Activated CD8-positive, alpha-beta memory T cell treated with anti-CD3 and anti-CD28 coated beads, Interleukin-2, amount 10 ng/mL, durations not matched to agents 7 days and 5 days (primary cell): ENCODE measurements at regions of chr7 and their contacts with region 1.

Region 1: DNA sequence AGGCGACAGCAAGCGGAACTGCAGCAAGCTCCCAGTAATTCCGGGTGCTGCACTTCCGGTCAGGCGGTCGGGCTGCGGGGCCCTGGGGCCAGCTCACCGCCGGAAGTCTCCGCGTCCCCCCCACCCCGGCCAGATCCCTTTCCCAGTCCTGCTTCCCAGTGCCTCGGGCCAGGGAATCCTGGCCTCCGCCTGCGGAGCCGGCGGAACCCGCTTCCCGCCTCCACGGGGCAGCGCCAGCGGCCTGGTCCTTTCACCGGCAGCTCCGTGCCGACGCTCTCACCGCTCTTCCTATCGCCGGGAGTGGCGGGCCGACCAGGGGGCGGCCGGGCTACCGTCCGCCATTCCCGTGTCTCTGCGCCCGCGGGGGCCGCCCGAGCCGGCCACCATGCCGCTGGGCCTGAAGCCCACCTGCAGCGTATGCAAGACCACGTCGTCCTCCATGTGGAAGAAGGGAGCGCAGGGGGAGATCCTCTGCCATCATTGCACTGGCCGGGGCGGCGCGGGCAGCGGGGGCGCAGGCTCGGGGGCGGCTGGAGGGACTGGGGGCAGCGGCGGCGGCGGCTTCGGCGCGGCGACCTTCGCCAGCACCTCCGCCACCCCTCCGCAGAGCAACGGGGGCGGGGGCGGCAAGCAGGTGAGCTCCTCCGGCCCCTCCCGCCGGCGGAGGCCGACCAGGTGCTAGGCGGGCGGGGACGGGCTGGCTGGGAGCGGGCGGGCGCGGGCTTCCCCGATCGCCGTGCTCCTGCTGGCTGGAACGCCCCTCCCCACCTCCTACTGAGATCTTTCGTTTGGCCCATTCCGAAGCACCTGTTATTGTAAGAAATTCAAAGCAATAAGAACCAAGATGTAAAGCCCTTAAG is at the start of gene GATAD1:
- DNase-seq: peak; percentile 89
- ATAC-seq: peak; percentile 85
- H3K4me3 Mint-ChIP-seq: peak within 1 kb of the TSS; percentile 80
- H3K27ac Mint-ChIP-seq: peak within 1 kb of the TSS; percentile 88
- H3K4me1 Mint-ChIP-seq: peaks cover 11% of the 10 kb centered on the region
- H3K27me3 Mint-ChIP-seq: no peaks in the 10 kb centered on the region
- total RNA-seq, gene GATAD1: 18.3 to 21.0 TPM

Region 2: DNA sequence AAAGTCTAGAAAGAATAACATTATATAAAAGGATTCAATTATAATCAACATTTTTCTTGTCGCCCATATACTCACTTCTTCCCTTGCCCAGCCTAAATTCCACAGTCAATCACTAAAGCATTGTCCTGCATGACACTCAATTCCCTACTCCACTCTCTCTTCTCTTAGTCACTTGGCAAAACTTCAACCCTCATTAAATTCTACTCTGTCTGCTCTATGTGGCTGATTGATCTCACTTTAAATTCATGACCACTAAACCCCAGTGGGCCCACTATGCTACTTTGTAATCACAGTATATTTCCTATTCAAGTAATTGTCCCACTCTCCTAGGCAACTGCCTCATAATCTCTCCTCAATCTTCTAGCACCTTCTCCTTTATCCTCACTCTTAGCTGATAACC is 621.2 kb before region 1 on chr7:
- CTCF ChIA-PET with region 1: interaction called, 17 read pairs
- DNase-seq: no peak
- ATAC-seq: no peak
- H3K4me3 Mint-ChIP-seq: no peak overlapping the region
- H3K27ac Mint-ChIP-seq: no peak overlapping the region
- H3K4me1 Mint-ChIP-seq: no peaks in the 10 kb centered on the region
- H3K27me3 Mint-ChIP-seq: no peaks in the 10 kb centered on the region

Region 3: DNA sequence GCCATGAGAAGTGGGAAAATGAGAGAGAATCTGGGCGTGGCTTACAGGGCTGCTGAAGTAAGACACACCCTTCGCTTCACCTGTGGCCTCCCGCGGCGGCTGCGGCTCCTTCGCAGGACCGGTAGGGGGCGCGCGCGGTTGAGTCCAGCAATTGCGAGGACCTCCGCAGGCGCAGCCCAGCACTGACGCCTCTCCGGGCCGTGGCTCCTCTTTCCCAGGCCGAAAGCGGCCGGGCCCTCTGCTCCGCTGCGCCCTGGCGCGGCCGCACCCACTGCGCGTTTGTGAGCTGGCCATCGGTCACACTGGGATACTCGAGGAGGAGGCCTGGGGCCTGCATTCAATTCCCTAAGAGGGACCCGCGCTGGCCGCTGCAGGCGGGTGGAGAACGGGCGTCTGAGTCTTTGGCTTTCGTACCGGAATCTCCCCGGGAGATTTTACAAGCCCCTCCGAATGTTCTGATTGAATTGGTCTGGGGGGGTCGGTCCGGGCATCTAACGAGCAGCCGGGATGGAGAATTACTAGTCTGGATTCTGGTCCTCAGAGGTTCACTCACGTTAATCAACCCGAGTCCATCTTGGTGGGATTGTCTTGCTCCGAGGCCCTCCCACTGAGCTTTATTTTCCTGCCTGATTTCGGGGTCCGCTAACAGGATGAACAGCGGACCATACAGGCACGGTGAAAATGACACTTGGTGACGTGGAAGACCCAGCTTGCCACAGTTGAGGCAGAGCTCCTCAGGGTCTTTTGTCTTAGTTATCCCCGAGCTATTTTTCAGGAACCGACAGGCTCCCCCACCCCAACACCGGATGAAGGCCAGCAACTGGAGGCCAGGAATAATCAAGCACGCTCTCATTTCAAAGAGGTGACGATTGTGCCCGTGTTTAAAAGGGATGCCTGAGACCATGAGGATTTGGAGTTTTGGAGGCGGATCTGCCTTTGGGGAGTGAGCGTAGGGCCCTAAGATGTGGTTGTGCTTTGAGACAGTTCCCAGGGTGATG is 268.3 kb before region 1 on chr7 and contains the start of gene LRRD1:
- CTCF ChIA-PET with region 1: interaction called, 19 read pairs
- DNase-seq: peak; percentile 93
- ATAC-seq: peak; percentile 100
- H3K4me3 Mint-ChIP-seq: peak within 1 kb of the TSS; percentile 70
- H3K27ac Mint-ChIP-seq: no peak within 1 kb of the TSS
- H3K4me1 Mint-ChIP-seq: peaks cover 11% of the 10 kb centered on the region
- H3K27me3 Mint-ChIP-seq: peaks cover 22% of the 10 kb centered on the region
- total RNA-seq, gene LRRD1: not detected

Region 4: GRCh38 chr7:92266415-92267241 is 180.9 kb before region 1 on chr7:
- CTCF ChIA-PET with region 1: no interaction called
- DNase-seq: no peak
- ATAC-seq: no peak
- H3K4me3 Mint-ChIP-seq: no peak overlapping the region
- H3K27ac Mint-ChIP-seq: no peak overlapping the region
- H3K4me1 Mint-ChIP-seq: no peaks in the 10 kb centered on the region
- H3K27me3 Mint-ChIP-seq: no peaks in the 10 kb centered on the region

Region 5: GRCh38 chr7:92404170-92404614 is 43.4 kb before region 1 on chr7:
- CTCF ChIA-PET with region 1: interaction called, 12 read pairs
- DNase-seq: peak; percentile 84
- ATAC-seq: peak; percentile 81
- H3K4me3 Mint-ChIP-seq: peak overlapping the region; percentile 48
- H3K27ac Mint-ChIP-seq: peak overlapping the region; percentile 79
- H3K4me1 Mint-ChIP-seq: peaks cover 20% of the 10 kb centered on the region
- H3K27me3 Mint-ChIP-seq: peaks cover 3% of the 10 kb centered on the region

Region 6: DNA sequence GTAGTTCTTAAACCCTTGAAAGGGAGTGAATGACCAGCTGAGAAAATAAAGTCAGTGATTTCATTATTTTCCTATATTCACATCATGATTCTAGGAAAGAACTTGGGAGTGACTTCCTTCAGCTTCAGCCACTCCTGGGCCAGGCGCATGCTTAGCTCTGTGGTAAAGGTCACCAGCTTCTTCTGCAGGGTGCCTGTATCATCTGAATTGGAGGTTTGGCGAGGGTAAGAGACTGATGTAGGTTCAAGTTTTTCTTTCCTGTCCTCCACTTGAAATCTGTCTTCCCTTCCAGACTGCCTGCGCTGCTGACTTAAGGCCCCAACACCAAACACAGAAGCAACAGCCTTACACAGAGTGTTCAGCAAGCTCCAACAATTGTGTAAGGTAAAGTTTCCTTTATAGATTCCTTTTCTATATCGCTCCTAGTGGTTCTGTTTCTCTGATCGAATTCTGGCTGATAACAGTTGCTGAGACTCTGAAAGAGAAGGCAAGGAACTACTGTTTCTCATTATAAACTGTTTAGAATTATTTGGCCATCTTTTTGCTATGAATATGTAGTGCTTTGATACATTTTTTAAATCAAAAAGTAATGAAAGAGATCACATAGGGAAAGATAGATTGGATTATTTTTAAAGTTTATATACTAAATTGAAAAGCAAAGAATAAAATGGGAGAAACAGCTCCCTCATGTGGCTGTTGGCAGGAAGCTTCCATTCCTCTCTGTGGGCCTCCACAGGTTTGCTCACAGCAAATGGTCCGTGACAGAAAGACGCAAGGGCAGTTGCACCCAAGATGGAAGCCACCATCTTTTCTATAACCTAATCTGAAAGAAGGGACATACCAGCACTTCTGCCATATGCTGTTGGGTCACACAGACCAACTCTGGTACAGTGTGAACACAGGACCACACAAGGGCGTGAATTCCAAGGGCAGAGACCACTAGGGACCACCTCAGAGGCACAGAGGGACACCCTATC is 13.7 kb after region 1 on chr7:
- CTCF ChIA-PET with region 1: interaction called, 31 read pairs
- DNase-seq: peak; percentile 47
- ATAC-seq: peak; percentile 75
- H3K4me3 Mint-ChIP-seq: no peak overlapping the region
- H3K27ac Mint-ChIP-seq: no peak overlapping the region
- H3K4me1 Mint-ChIP-seq: peaks cover 2% of the 10 kb centered on the region
- H3K27me3 Mint-ChIP-seq: no peaks in the 10 kb centered on the region